Activated CD4-positive, alpha-beta memory T cell treated with anti-CD3 and anti-CD28 coated beads for 36 hours (primary cell): ENCODE measurements at regions of chr16 and their contacts with region 1.

Region 1: DNA sequence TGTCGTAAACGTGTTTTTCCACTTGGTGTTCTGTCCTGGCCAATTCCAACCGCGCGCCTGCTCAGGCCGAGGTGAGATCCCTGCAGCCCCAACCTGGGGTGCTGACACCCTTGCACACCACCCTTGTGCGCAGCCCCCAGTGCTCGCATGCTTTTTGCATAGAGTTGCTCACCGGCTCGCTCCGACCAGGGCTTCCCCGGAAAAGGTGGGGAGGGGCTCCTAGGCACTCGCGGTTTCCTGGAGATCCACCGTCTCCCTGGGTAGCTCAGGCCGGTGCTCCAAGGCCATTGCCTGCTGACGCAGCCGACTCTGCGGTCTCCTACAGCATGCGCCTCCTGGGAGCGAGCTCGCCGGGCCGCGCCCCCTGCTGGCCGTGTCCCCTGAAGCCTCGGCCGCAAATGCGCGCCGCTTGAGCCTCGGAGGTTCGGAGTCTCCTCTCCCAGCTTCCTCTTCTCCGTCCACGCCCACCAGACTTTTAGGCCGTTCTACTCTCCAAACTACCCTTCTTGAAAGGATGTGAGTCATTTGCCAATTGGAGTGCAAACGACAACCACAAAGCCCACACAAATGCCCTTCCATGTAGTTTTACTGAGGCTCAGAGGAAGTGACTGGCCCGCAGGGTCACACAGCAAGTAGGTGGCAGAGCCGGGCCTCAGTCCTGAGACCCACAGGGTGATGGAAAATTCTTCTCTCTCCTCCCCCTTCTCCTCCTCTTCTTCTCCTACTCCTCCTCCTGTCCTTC is 7.2 kb upstream of the PDP2 start:
- DNase-seq: peak; percentile 96
- H3K4me3 Mint-ChIP-seq: peak overlapping the region; percentile 74
- H3K27ac Mint-ChIP-seq: peak overlapping the region; percentile 69
- H3K4me1 Mint-ChIP-seq: peaks cover 46% of the 10 kb centered on the region
- H3K27me3 Mint-ChIP-seq: no peaks in the 10 kb centered on the region

Region 2: DNA sequence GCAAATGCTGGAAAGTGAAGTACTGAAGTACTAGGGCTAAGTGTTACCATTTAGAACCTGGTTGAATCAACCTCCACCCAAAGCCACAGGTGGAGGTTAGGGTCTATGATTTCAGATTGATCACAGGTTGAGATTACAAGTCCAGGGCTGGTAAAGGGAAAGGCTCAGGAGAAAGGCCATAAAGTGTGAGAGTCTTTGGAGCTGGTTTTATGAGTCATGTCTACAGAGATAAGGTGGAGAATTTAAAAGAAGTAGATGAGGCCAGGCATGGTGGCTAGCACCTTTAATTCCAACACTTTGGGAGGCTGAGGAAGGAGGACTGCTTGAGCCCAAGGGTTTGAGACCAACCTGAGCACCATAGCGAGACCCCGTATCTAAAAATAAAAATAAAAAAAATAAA is 1529.6 kb before region 1 on chr16:
- CTCF ChIA-PET with region 1: no interaction called
- POLR2A ChIA-PET with region 1: no interaction called
- intact Hi-C with region 1: no loop called
- DNase-seq: no peak
- H3K4me3 Mint-ChIP-seq: no peak overlapping the region
- H3K27ac Mint-ChIP-seq: no peak overlapping the region
- H3K4me1 Mint-ChIP-seq: no peaks in the 10 kb centered on the region
- H3K27me3 Mint-ChIP-seq: no peaks in the 10 kb centered on the region

Region 3: GRCh38 chr16:66562407-66562806 is 310.7 kb before region 1 on chr16:
- CTCF ChIA-PET with region 1: interaction called, 8 read pairs
- POLR2A ChIA-PET with region 1: interaction called, 4 read pairs
- intact Hi-C with region 1: loop called (anchors 5 kb)
- DNase-seq: no peak
- H3K4me3 Mint-ChIP-seq: no peak overlapping the region
- H3K27ac Mint-ChIP-seq: no peak overlapping the region
- H3K4me1 Mint-ChIP-seq: peaks cover 71% of the 10 kb centered on the region
- H3K27me3 Mint-ChIP-seq: no peaks in the 10 kb centered on the region

Region 4: GRCh38 chr16:66696669-66697630 is 176.2 kb before region 1 on chr16 and contains the start of gene CMTM4:
- CTCF ChIA-PET with region 1: interaction called, 10 read pairs
- POLR2A ChIA-PET with region 1: no interaction called
- intact Hi-C with region 1: no loop called
- DNase-seq: peak; percentile 79
- H3K4me3 Mint-ChIP-seq: peak within 1 kb of the TSS; percentile 74
- H3K27ac Mint-ChIP-seq: no peak within 1 kb of the TSS
- H3K4me1 Mint-ChIP-seq: no peaks in the 10 kb centered on the region
- H3K27me3 Mint-ChIP-seq: peaks cover 4% of the 10 kb centered on the region
- total RNA-seq, gene CMTM4: 2.8 to 4.1 TPM

Region 5: DNA sequence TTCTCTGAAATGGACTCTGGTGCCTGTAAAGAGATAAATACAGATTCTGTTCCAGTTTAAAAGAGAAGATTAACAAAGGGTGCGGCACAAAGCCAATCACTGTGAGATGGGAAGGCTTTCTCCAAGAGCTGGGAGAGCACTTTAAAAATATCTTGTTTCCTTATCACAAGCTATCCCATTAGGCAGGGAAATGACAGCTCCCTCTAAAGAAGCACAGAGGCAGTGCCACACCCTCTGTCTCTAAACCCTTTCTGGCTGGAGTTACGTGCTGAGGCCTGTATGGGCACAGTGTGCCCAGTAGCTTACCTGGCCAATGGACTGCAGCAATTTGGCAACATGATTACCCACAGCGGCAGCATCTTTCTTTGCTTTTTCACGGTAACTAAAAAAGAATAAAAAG is 62.7 kb before region 1 on chr16:
- CTCF ChIA-PET with region 1: interaction called, 10 read pairs
- POLR2A ChIA-PET with region 1: no interaction called
- intact Hi-C with region 1: no loop called
- DNase-seq: no peak
- H3K4me3 Mint-ChIP-seq: no peak overlapping the region
- H3K27ac Mint-ChIP-seq: no peak overlapping the region
- H3K4me1 Mint-ChIP-seq: no peaks in the 10 kb centered on the region
- H3K27me3 Mint-ChIP-seq: no peaks in the 10 kb centered on the region

Region 6: GRCh38 chr16:66858740-66859396 is 14.2 kb before region 1 on chr16:
- CTCF ChIA-PET with region 1: interaction called, 24 read pairs
- POLR2A ChIA-PET with region 1: no interaction called
- intact Hi-C with region 1: no loop called
- DNase-seq: no peak
- H3K4me3 Mint-ChIP-seq: no peak overlapping the region
- H3K27ac Mint-ChIP-seq: no peak overlapping the region
- H3K4me1 Mint-ChIP-seq: no peaks in the 10 kb centered on the region
- H3K27me3 Mint-ChIP-seq: no peaks in the 10 kb centered on the region

Region 7: GRCh38 chr16:67279296-67280089 is 406.4 kb after region 1 on chr16 and contains the start of gene PLEKHG4:
- CTCF ChIA-PET with region 1: no interaction called
- POLR2A ChIA-PET with region 1: no interaction called
- intact Hi-C with region 1: no loop called
- DNase-seq: peak; percentile 90
- H3K4me3 Mint-ChIP-seq: peak within 1 kb of the TSS; percentile 86
- H3K27ac Mint-ChIP-seq: peak within 1 kb of the TSS; percentile 88
- H3K4me1 Mint-ChIP-seq: peaks cover 20% of the 10 kb centered on the region
- H3K27me3 Mint-ChIP-seq: no peaks in the 10 kb centered on the region
- total RNA-seq, gene PLEKHG4: 22.7 to 24.6 TPM

Region 8: DNA sequence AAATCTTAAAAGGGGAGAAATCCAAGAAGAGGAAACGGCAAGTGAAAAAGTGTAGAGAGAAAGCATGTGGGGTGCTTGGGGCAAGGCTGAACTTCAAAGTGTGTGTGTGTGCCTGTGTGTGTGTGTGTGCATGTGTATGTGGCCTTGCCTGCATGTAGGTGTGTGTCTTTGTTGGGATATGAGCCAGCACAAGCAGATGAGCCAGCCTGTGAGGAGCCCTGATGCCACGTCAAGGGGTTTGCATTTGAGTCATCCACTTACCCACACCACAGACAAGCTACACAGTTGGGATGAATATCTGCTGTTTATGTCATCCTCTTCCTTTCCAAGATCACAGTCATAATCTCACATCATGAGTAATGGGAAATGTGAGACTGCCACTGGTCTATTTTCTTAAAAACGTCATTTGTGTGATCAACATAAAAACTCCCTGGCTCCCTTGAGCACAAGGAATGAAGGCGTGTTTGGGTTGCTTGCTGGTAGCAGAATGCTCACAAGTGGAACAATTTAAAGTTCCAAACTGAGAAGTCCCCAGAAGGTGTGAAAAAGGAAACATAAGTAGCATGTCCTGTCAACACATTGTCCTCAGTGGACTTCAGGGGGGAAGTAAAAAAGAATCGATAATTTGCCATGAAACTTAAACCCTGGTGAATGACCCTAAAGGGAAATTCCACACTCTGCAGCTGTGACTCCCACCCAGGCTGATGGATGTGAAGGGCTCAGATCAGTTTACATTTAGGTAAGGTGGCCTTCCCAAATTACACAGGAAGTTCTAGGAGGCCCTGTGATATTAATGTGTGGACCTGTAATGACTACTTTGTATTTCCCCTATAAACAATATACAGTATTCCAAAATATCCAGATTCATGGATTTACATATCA is 438.7 kb after region 1 on chr16:
- CTCF ChIA-PET with region 1: interaction called, 4 read pairs
- POLR2A ChIA-PET with region 1: no interaction called
- intact Hi-C with region 1: loop called (anchors 1 kb)
- DNase-seq: peak; percentile 95
- H3K4me3 Mint-ChIP-seq: peak overlapping the region; percentile 20
- H3K27ac Mint-ChIP-seq: peak overlapping the region; percentile 95
- H3K4me1 Mint-ChIP-seq: peaks cover 41% of the 10 kb centered on the region
- H3K27me3 Mint-ChIP-seq: no peaks in the 10 kb centered on the region